PC-3 (cell line): ENCODE measurements at regions of chr3 and their contacts with region 1.

Region 1: DNA sequence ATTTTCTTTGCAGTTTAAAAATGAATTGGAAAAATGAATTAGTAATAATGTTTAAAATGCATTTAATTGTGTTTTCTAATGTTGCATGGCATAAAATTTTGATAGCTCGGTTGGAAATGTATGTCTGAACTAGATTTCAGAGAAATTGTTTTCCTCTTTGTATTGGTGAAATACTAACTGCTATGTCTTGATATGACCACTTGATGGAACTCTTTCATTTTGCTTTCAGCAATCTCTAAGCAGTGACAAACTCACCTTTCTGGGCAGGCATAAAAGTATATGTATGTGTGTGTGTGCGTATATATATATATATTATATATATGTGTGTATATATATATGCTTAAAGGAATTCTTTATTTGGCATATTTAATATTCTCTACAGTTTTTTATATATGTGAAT is 239.3 kb upstream of the ZNF717 start:
- DNase-seq: peak; percentile 63
- ATAC-seq: peak; percentile 63
- H3K4me3 ChIP-seq: no peak overlapping the region
- H3K27ac ChIP-seq: no peak overlapping the region
- H3K4me1 ChIP-seq: peaks cover 15% of the 10 kb centered on the region
- H3K27me3 ChIP-seq: no peaks in the 10 kb centered on the region
- CTCF ChIP-seq: peak; percentile 66

Region 2: DNA sequence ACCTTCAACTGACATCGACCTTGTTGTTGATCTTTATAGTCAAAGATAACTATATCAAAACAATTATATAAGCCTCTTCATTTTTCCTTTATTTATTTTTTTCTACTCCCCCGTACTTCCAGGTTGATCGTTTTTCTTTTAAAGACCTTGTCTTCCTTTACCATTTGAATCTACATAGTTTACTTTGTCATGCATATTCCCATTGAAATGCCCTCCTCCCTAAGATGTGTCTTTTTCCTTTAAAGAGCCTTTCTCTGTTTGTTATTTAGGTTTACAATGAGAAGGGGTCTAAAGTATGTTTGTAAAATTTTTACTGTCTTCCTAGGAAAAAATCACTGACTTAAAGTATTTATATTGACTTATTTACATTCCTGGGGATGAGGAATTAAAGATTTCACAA is 209.8 kb before region 1 on chr3:
- CTCF ChIA-PET with region 1: no interaction called
- POLR2A ChIA-PET with region 1: no interaction called
- intact Hi-C with region 1: loop called (anchors 5 kb)
- DNase-seq: no peak
- ATAC-seq: no peak
- H3K4me3 ChIP-seq: no peak overlapping the region
- H3K27ac ChIP-seq: no peak overlapping the region
- H3K4me1 ChIP-seq: no peaks in the 10 kb centered on the region
- H3K27me3 ChIP-seq: no peaks in the 10 kb centered on the region
- CTCF ChIP-seq: no peak

Region 3: GRCh38 chr3:75863878-75864277 is 160.8 kb before region 1 on chr3:
- CTCF ChIA-PET with region 1: no interaction called
- POLR2A ChIA-PET with region 1: no interaction called
- intact Hi-C with region 1: no loop called
- DNase-seq: no peak
- ATAC-seq: no peak
- H3K4me3 ChIP-seq: no peak overlapping the region
- H3K27ac ChIP-seq: no peak overlapping the region
- H3K4me1 ChIP-seq: no peaks in the 10 kb centered on the region
- H3K27me3 ChIP-seq: peaks cover 9% of the 10 kb centered on the region; the same call in 1 of the 2 replicates
- CTCF ChIP-seq: no peak

Region 4: DNA sequence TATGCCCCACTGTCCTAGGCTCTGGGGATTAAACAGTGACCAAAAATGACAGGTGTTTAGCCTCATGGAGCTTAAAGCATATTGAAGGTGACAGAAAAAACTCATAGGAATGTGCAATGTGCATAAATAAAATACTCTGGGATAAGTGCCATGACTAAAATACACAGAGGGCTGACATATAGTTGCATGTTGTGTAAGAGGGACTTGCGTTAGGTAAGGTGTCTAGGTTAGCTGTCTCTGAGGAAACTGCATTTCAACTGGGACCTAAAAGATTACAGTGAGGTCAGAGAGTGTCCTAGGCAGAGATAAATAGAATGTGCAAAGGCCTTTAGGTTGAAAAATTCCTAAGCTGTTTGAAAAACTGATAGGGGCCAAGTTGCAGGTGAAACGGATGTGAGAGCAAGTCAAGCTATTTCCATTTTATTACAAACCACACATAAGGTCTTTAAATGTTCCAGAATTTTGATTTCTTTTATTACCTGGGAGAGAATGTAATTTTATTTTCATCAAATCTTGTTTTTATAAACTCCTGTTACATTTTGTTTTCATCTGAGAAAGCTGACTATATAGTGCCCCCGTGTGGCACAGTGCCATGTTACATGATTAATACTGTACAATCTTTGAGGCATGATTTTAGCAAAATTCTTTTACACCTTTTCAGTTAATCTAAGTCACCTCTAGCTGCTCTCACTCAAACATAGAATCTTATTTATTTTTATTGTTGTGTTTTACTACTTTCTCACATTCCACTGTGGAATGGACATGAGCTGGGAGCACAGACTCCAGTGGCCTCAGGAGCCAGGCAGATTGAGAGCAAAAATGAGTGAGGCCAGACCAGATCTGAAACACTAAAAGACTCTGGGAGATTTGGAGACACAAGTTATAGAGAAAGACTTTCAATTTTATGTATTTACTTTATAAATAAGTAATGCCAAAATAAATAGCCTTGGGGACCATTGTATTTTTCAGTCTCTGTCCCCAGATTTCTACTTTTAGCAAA is 20.3 kb after region 1 on chr3:
- CTCF ChIA-PET with region 1: no interaction called
- POLR2A ChIA-PET with region 1: no interaction called
- intact Hi-C with region 1: loop called (anchors 1 kb)
- DNase-seq: peak; percentile 69
- ATAC-seq: peak; percentile 60
- H3K4me3 ChIP-seq: no peak overlapping the region
- H3K27ac ChIP-seq: no peak overlapping the region
- H3K4me1 ChIP-seq: peaks cover 6% of the 10 kb centered on the region
- H3K27me3 ChIP-seq: no peaks in the 10 kb centered on the region
- CTCF ChIP-seq: peak; percentile 88

Region 5: DNA sequence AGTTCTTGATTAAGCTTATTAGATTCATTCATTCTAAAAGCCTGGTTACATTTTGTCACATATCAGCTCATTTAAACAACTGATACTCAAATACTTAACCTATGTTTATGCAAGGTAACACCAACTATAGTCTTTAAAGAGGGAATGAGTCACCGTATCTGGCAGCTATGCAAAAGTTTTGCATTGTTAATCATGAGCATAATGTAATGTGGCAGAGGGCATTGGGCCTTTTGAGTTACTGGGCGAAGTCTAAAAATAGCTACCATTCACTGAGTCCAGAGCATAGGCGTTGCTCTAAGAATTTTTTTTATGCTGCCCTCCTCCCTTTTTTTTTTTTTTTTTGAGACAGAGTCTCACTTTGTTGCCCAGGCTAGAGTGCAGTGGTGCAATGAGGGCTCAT is 38.4 kb after region 1 on chr3:
- CTCF ChIA-PET with region 1: no interaction called
- POLR2A ChIA-PET with region 1: no interaction called
- intact Hi-C with region 1: loop called (anchors 5 kb)
- DNase-seq: peak; percentile 96
- ATAC-seq: peak; percentile 97
- H3K4me3 ChIP-seq: no peak overlapping the region
- H3K27ac ChIP-seq: no peak overlapping the region
- H3K4me1 ChIP-seq: peaks cover 24% of the 10 kb centered on the region
- H3K27me3 ChIP-seq: no peaks in the 10 kb centered on the region
- CTCF ChIP-seq: no peak

Region 6: DNA sequence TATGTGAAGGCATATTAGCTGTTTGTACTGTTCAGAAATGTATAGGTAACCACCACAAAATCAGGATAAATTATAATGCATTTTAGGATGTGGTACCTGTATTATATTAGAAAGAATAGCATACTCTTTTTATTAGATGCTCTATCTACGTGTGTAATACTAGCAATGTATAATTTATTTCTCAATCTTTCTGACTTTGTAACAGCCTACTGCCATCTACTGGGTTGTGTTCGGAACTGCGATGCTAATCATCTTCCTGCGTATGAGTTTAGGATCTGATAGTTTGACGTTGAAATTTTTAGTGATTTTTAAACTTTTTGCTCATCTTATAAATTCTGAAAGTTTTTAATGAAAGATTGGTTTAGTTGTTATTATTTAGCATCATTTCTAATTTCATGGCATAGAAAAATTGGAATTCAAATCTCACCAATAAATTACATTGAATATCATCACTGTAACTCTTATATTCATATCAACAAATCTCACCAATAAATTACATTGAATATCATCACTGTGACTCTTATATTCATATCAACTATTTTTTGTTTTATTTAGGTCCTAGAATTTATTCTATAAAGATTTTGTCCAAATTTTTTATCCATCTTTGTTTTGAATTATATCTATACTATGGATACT is 83.4 kb after region 1 on chr3:
- CTCF ChIA-PET with region 1: no interaction called
- POLR2A ChIA-PET with region 1: no interaction called
- intact Hi-C with region 1: loop called (anchors 1 kb)
- DNase-seq: peak; percentile 72
- ATAC-seq: peak; percentile 75
- H3K4me3 ChIP-seq: no peak overlapping the region
- H3K27ac ChIP-seq: no peak overlapping the region
- H3K4me1 ChIP-seq: no peaks in the 10 kb centered on the region
- H3K27me3 ChIP-seq: no peaks in the 10 kb centered on the region
- CTCF ChIP-seq: peak; percentile 93